Activated naive CD4-positive, alpha-beta T cell treated with anti-CD3 and anti-CD28 coated beads, Interleukin-2, amount 10 ng/mL, durations not matched to agents 7 days and 5 days (primary cell): ENCODE measurements at regions of chr12 and their contacts with region 1.

Region 1: GRCh38 chr12:122793685-122794106 is 19.3 kb downstream of the CCDC62 start:
- DNase-seq: no peak
- H3K4me3 Mint-ChIP-seq: no peak overlapping the region
- H3K27ac Mint-ChIP-seq: no peak overlapping the region
- H3K4me1 Mint-ChIP-seq: no peaks in the 10 kb centered on the region
- H3K27me3 Mint-ChIP-seq: peaks cover 4% of the 10 kb centered on the region

Region 2: GRCh38 chr12:122421821-122422729 is 371.6 kb before region 1 on chr12 and contains the start of gene CLIP1:
- CTCF ChIA-PET with region 1: no interaction called
- DNase-seq: peak; percentile 74
- H3K4me3 Mint-ChIP-seq: peak within 1 kb of the TSS; percentile 84
- H3K27ac Mint-ChIP-seq: peak within 1 kb of the TSS; percentile 88
- H3K4me1 Mint-ChIP-seq: peaks cover 46% of the 10 kb centered on the region
- H3K27me3 Mint-ChIP-seq: peaks cover 9% of the 10 kb centered on the region

Region 3: GRCh38 chr12:122614839-122615238 is 178.9 kb before region 1 on chr12:
- CTCF ChIA-PET with region 1: no interaction called
- DNase-seq: no peak
- H3K4me3 Mint-ChIP-seq: no peak overlapping the region
- H3K27ac Mint-ChIP-seq: no peak overlapping the region
- H3K4me1 Mint-ChIP-seq: no peaks in the 10 kb centered on the region
- H3K27me3 Mint-ChIP-seq: no peaks in the 10 kb centered on the region

Region 4: GRCh38 chr12:122825773-122826724 is 32.4 kb after region 1 on chr12:
- CTCF ChIA-PET with region 1: interaction called, 12 read pairs
- DNase-seq: no peak
- H3K4me3 Mint-ChIP-seq: no peak overlapping the region
- H3K27ac Mint-ChIP-seq: no peak overlapping the region
- H3K4me1 Mint-ChIP-seq: no peaks in the 10 kb centered on the region
- H3K27me3 Mint-ChIP-seq: peaks cover 20% of the 10 kb centered on the region

Region 5: GRCh38 chr12:122834104-122834920 is 40.6 kb after region 1 on chr12:
- CTCF ChIA-PET with region 1: interaction called, 17 read pairs
- DNase-seq: peak; percentile 49
- H3K4me3 Mint-ChIP-seq: peak overlapping the region; percentile 83
- H3K27ac Mint-ChIP-seq: peak overlapping the region; percentile 80
- H3K4me1 Mint-ChIP-seq: peaks cover 35% of the 10 kb centered on the region
- H3K27me3 Mint-ChIP-seq: peaks cover 37% of the 10 kb centered on the region